Activated naive CD4-positive, alpha-beta T cell treated with anti-CD3 and anti-CD28 coated beads for 36 hours (primary cell): ENCODE measurements at regions of chr5 and their contacts with region 1.

Region 1: DNA sequence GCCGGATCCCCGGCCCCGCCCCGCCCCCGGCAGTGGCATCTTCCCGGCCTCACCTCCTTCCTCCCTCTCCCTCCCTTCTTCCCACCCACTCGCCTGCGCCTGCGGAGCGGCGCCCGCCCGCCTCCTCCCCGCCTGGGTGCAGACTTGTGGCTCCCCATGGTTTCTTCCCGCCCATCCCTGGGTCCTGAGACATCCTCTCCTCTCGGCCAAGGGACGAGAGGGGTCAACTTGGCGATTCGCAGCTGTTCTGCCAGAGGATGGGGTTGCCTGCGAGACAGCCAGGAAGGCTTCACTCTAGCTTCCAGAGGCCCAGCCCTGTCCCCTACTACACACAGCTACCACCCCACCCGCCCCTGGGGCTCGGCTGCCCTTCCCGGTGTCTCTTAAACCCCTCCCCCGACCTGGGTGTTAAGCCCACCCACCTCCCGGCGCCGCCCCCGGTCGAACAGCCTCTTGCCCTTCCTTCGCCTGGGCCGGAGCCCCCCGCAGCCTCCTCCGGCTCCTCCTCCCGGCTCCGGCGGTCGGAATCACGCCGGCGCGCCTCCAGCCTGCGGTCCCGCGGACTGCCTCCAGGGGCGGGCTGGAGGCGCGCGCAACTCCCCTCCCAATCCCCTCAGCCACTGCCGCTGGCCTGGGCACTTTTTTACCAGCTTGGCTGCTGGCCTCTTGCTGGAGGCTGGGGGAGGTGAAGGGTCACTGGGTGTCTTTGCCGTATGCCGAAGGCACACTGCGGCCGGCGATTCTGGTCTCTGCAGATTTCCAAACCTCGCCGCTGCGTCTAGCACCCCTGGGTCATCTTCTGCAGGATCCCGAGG is 1.9 kb downstream of the JADE2 start:
- DNase-seq: peak; percentile 78
- H3K4me3 Mint-ChIP-seq: peak overlapping the region; percentile 88
- H3K27ac Mint-ChIP-seq: peak overlapping the region; percentile 95
- H3K4me1 Mint-ChIP-seq: peaks cover 46% of the 10 kb centered on the region
- H3K27me3 Mint-ChIP-seq: no peaks in the 10 kb centered on the region

Region 2: GRCh38 chr5:134370871-134371833 is 156.2 kb before region 1 on chr5 and contains the start of gene UBE2B:
- CTCF ChIA-PET with region 1: interaction called, 4 read pairs
- intact Hi-C with region 1: loop called (anchors 1 kb)
- DNase-seq: peak; percentile 99
- H3K4me3 Mint-ChIP-seq: peak within 1 kb of the TSS; percentile 98
- H3K27ac Mint-ChIP-seq: peak within 1 kb of the TSS; percentile 99
- H3K4me1 Mint-ChIP-seq: peaks cover 58% of the 10 kb centered on the region
- H3K27me3 Mint-ChIP-seq: no peaks in the 10 kb centered on the region
- total RNA-seq, gene UBE2B: 116 to 129 TPM

Region 3: DNA sequence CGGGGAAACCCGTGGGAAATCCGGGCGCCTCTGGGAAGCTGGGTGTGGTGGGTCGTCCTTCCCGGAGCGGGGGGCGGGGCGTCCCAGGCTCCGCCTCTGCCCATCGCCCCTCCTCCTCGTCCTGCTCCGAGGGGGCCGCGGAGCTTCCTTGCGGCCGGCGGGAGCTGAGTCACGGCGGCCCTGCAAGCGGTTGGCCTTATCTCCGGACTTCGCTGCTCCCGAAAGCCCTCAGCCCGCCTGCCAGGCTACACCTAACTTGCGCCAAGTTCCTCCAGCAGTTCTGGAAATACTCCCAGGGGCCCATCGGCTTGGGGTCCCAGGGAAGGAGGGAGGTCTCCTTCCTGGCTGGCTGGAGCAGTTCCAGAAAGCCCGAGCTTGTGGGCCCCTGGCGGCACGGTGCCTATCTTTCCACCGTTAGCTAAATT is 61.5 kb before region 1 on chr5:
- CTCF ChIA-PET with region 1: interaction called, 6 read pairs
- intact Hi-C with region 1: loop called (anchors 1 kb)
- DNase-seq: peak; percentile 73
- H3K4me3 Mint-ChIP-seq: peak overlapping the region; percentile 81
- H3K27ac Mint-ChIP-seq: peak overlapping the region; percentile 81
- H3K4me1 Mint-ChIP-seq: peaks cover 19% of the 10 kb centered on the region
- H3K27me3 Mint-ChIP-seq: no peaks in the 10 kb centered on the region

Region 4: GRCh38 chr5:134541736-134542376 is 14.5 kb after region 1 on chr5:
- CTCF ChIA-PET with region 1: interaction called, 29 read pairs
- intact Hi-C with region 1: loop called (anchors 1 kb)
- DNase-seq: peak; percentile 57
- H3K4me3 Mint-ChIP-seq: no peak overlapping the region
- H3K27ac Mint-ChIP-seq: no peak overlapping the region
- H3K4me1 Mint-ChIP-seq: peaks cover 67% of the 10 kb centered on the region
- H3K27me3 Mint-ChIP-seq: no peaks in the 10 kb centered on the region

Region 5: GRCh38 chr5:134648425-134649162 is 121.2 kb after region 1 on chr5 and contains the start of gene SEC24A:
- CTCF ChIA-PET with region 1: no interaction called
- intact Hi-C with region 1: loop called (anchors 2 kb)
- DNase-seq: peak; percentile 92
- H3K4me3 Mint-ChIP-seq: peak within 1 kb of the TSS; percentile 89
- H3K27ac Mint-ChIP-seq: peak within 1 kb of the TSS; percentile 100
- H3K4me1 Mint-ChIP-seq: peaks cover 35% of the 10 kb centered on the region
- H3K27me3 Mint-ChIP-seq: no peaks in the 10 kb centered on the region
- total RNA-seq, gene SEC24A: 16.6 to 18.5 TPM